WTC11 (cell line): ENCODE measurements at regions of chr17 and their contacts with region 1.

Region 1: GRCh38 chr17:79810130-79811010 is 13.5 kb upstream of the CBX8 start:
- DNase-seq: peak; percentile 83
- ATAC-seq: peak; percentile 74
- H3K4me3 Mint-ChIP-seq: peak overlapping the region; percentile 59
- H3K27ac Mint-ChIP-seq: no peak overlapping the region
- H3K4me1 Mint-ChIP-seq: peaks cover 40% of the 10 kb centered on the region
- H3K27me3 Mint-ChIP-seq: peaks cover 92% of the 10 kb centered on the region
- CTCF ChIP-seq: no peak

Region 2: DNA sequence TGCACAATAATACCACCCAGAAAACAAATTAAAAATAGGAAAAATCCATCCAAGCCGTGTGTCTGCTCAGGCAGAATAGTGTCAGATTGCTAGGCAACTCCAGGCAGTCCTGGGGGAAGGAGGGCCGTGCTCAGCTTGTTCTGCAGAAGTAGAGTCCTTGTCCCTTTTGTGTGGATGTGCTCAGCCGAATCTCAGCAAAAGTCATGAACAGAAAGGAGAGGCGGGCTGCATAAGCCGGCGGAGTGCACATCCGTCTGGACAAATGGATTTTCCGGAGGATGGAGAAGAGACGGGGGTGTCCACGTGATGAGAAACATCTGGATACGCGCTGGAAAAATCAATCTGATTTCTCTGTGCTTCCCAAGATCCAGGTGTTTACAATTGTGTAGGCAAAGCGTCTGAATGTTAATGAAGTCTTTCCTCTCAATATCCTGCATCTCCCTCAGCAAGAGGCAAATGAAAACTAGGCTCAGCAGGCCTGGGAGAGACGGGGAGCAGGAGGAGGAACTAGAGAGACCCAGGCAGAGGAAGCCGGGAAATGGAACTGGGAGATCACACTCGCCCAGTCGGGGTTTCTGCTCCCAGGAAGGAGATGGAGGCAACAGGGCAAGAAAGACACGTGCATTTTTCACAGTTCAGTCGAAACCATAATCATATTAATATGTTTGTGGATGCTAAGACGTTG is 191.8 kb before region 1 on chr17:
- CTCF ChIA-PET with region 1: no interaction called
- POLR2A ChIA-PET with region 1: no interaction called
- DNase-seq: peak; percentile 8
- ATAC-seq: no peak
- H3K4me3 Mint-ChIP-seq: no peak overlapping the region
- H3K27ac Mint-ChIP-seq: no peak overlapping the region
- H3K4me1 Mint-ChIP-seq: peaks cover 19% of the 10 kb centered on the region
- H3K27me3 Mint-ChIP-seq: peaks cover 8% of the 10 kb centered on the region
- CTCF ChIP-seq: no peak

Region 3: GRCh38 chr17:79852748-79853147 is 42.4 kb after region 1 on chr17:
- CTCF ChIA-PET with region 1: no interaction called
- POLR2A ChIA-PET with region 1: no interaction called
- DNase-seq: no peak
- ATAC-seq: no peak
- H3K4me3 Mint-ChIP-seq: no peak overlapping the region
- H3K27ac Mint-ChIP-seq: no peak overlapping the region
- H3K4me1 Mint-ChIP-seq: peaks cover 3% of the 10 kb centered on the region
- H3K27me3 Mint-ChIP-seq: peaks cover 17% of the 10 kb centered on the region
- CTCF ChIP-seq: no peak

Region 4: GRCh38 chr17:79915850-79916430 is 105.6 kb after region 1 on chr17:
- CTCF ChIA-PET with region 1: interaction called, 13 read pairs
- POLR2A ChIA-PET with region 1: no interaction called
- DNase-seq: peak; percentile 72
- ATAC-seq: peak; percentile 76
- H3K4me3 Mint-ChIP-seq: no peak overlapping the region
- H3K27ac Mint-ChIP-seq: no peak overlapping the region
- H3K4me1 Mint-ChIP-seq: peaks cover 4% of the 10 kb centered on the region; the same call in 1 of the 2 replicates
- H3K27me3 Mint-ChIP-seq: no peaks in the 10 kb centered on the region
- CTCF ChIP-seq: no peak